Right ventricle myocardium superior (tissue), 1 donor: ENCODE measurements at regions of chr19 and their contacts with region 1.

Region 1: GRCh38 chr19:41263850-41264580 is at the start of gene HNRNPUL1:
- DNase-seq: peak; percentile 99
- ATAC-seq: peak; percentile 83
- total RNA-seq, gene HNRNPUL1: 114 TPM

Region 2: GRCh38 chr19:41206926-41207750 is 56.9 kb before region 1 on chr19:
- intact Hi-C with region 1: loop called (anchors 1 kb)
- DNase-seq: peak; percentile 93
- ATAC-seq: peak; percentile 91

Region 3: GRCh38 chr19:41298348-41298964 is 34.4 kb after region 1 on chr19:
- intact Hi-C with region 1: loop called (anchors 5 kb)
- DNase-seq: peak; percentile 90
- ATAC-seq: peak; percentile 78